Gastrocnemius medialis (tissue), 4 donors: ENCODE measurements at regions of chr7 and their contacts with region 1.

Region 1: DNA sequence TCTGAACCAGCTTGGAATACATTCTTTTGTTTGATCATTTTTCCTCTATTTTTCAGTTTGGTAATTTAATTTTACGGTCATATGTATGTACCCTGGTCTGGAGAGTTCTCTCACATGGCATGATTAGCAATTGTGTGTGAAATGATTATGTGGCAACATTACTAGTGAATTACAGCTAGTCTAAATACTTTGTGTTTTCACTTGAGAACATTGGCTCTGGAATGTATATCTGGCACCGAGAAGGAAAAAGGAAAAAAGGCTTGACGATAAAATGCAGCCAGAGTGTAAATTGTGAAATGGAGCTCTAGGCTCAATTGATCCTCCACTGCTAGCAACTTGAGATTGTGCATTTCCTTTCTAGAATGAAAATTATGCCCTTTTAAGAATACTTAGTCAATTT is 397.2 kb downstream of the EXOC4 start:
- DNase-seq: no peak
- ATAC-seq: no peak
- H3K4me3 ChIP-seq: no peak overlapping the region
- H3K27ac ChIP-seq: no peak overlapping the region
- H3K4me1 ChIP-seq: no peaks in the 10 kb centered on the region
- H3K27me3 ChIP-seq: no peaks in the 10 kb centered on the region
- CTCF ChIP-seq: no peak
- POLR2A ChIP-seq: no peak

Region 2: DNA sequence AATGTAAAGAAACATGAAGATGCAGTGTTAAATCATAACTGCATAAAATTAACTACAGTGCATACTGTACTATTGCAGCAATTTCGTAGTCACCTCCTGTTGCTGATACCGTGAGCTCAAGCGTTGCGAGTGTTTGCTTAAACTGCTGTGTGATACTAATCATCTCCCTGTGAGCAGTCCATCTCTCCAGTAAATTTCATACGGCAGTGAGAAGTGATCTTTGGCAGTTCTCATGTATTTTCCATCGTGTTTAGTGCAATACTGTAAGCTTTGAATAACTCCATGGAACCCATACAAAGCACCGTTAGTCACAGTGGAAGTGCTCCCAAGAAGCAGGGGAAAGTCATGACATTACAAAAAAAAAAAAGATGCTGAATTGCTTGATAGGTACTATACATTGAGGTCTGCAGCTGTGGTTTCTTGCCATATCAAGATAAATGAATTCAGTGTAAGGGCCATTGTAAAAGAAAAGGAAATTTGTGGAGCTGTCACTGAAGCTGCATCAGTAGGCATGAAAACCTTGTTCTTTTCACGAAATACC is 36.7 kb before region 1 on chr7:
- in situ Hi-C with region 1: no loop called
- intact Hi-C with region 1: no loop called
- DNase-seq: no peak
- ATAC-seq: no peak
- H3K4me3 ChIP-seq: no peak overlapping the region
- H3K27ac ChIP-seq: no peak overlapping the region
- H3K4me1 ChIP-seq: no peaks in the 10 kb centered on the region
- H3K27me3 ChIP-seq: no peaks in the 10 kb centered on the region
- CTCF ChIP-seq: no peak
- POLR2A ChIP-seq: no peak

Region 3: DNA sequence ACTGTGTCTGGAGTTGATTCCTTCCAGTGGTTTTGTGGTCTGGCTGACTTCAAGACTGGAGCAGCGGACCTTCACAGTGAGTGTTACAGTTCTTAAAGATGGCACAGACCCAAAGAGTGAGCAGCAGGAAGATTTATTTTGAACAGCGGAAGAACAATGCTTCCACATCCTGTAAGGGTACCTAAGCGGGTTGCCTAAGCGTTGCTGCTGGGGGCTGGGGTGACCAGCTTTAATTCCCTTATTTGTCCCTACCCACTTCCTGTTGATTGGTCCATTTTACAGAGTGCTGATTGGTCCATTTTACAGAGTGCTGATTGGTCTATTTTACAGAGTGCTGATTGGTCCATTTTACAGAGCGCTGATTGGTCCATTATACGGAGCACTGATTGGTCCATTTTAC is 912.1 kb after region 1 on chr7:
- in situ Hi-C with region 1: no loop called
- intact Hi-C with region 1: loop called (anchors 10 kb)
- DNase-seq: no peak
- ATAC-seq: no peak
- H3K4me3 ChIP-seq: no peak overlapping the region
- H3K27ac ChIP-seq: no peak overlapping the region
- H3K4me1 ChIP-seq: peaks cover 0 to 14% of the 10 kb centered on the region in 2 donors
- H3K27me3 ChIP-seq: no peaks in the 10 kb centered on the region
- CTCF ChIP-seq: no peak
- POLR2A ChIP-seq: no peak